HEK293 (cell line): ENCODE measurements at regions of chr20 and their contacts with region 1.

Region 1: DNA sequence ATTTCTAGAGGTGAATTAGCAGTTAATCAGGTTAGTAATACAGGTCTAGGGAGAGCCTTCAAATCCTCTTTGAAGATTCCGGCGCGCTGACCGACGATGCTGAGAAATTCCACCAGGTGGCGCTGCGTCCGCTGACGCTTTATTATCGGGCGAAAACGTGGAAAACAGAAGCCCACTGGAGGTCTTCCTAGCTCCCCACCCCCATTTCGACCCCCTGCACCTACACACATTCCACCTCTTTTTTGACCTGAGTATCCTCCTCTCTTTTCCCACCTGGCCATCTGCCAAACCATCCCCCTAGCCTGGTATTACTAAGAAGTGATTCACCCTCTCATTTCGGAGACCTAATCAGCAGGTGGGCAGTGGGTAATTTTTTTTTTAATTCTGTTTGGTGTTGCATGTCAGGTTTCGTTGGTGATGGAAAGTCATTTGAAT is 65.4 kb upstream of the RIN2 start:
- H3K4me3 ChIP-seq: no peak overlapping the region
- H3K27ac ChIP-seq: no peak overlapping the region
- H3K4me1 ChIP-seq: no peaks in the 10 kb centered on the region
- CTCF ChIP-seq: peak; percentile 50

Region 2: GRCh38 chr20:19706463-19706862 is 13.8 kb after region 1 on chr20:
- CTCF ChIA-PET with region 1: interaction called, 16 read pairs
- POLR2A ChIA-PET with region 1: no interaction called
- H3K4me3 ChIP-seq: no peak overlapping the region
- H3K27ac ChIP-seq: no peak overlapping the region
- H3K4me1 ChIP-seq: no peaks in the 10 kb centered on the region
- CTCF ChIP-seq: no peak